BJ (cell line): ENCODE measurements at regions of chr2 and their contacts with region 1.

Region 1: DNA sequence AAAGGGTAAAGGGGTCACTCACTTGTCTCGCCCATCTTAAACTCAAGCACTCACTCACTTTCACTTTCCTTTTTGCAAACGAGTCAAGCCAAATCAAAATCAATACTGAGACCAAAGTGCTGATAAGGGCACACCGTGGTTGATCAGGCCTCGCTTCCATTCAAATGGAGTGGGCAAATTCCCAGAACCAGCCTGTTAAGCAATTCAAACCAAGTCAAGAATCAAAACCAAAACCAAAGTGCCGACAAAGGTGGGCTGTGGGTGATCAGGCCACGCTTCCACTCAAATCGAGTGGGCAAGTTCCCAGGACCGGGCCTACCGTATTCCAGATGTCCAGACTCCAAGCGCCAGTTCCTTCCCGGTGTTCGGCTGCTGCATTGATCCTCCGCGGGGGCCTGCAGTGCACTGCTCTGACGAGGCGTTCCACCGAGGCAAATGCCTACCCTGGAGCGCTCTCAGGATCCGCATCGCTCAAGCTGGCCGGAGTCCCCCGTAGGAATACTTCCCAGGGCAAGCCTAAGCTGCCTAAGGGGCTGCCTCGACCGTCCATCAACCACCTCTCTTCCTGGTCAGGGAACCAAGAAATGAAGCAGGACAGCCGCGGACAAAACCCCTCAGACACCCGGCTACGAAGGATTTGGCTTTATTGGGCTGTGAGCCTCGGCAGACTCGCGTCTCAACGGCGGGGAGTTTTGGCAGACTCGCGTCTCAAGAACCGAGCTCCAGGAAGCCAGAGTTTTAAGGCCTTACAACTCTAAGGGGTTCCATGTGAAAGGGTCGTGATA is 89.9 kb upstream of the SLC1A4 start:
- DNase-seq: no peak
- H3K4me3 ChIP-seq: no peak overlapping the region
- H3K27me3 ChIP-seq: peaks cover 12% of the 10 kb centered on the region
- CTCF ChIP-seq: no peak

Region 2: DNA sequence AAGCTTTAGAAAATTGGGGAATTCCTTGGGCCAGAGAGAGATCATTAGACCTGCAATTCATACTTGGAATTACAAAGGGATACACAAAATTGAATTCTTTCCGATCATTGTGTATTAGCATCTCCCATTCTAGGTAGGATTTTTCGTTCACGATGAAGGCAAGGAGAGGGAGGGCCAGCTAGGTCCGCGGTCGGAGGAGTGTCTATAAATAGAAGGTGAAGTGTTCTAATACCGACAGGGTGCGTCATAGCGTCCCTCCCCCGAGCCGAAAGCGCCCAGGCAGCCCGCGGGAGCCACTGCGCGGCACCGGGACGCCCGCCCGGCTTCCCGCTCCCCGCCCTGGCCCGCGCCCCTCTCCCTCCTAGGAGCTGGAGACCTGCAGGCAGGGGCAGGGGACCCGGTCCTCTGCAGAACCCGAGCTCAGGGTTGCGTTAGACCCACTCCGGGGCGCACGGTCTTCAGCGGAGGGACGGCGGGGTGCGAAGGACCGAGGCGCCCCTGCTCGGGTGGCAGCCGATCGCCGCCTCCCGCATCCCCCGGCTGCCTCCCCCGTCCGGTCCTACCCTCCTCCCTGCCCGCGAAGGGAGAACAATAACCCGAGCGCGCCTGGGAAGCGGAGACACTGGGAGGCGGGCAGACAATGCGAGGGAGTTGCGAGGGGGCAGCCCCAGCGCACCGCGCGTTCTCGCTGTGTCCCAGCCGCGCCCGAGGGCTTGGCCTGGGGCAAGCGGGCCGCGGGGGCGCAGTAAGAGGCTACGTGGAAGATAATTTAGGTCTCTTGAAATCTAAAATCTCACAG is 131.4 kb before region 1 on chr2:
- CTCF ChIA-PET with region 1: no interaction called
- POLR2A ChIA-PET with region 1: no interaction called
- DNase-seq: no peak
- H3K4me3 ChIP-seq: peak overlapping the region; percentile 57
- H3K27me3 ChIP-seq: no peaks in the 10 kb centered on the region
- CTCF ChIP-seq: no peak

Region 3: DNA sequence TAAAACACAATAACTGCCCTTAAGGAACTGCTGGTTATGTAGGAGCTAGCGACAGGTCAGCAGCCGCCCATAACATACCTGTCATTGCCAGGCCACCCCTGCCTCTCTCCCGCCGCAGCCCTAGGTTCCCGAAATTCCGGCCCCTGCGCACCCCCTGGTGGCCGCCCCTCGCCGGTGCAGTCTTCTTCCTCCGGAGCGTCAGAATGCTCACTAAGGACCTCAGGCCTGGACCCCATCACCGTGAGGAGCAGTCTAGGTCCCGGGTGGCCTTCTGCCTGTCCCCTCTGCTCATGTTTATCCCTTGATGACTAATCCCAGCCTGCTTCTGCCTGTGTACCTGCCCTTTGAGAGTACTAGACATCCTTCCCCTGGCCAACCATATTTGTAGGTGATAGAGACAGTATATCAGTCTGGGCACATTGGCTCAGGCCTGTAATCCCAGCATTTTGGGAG is 25.8 kb before region 1 on chr2:
- CTCF ChIA-PET with region 1: no interaction called
- POLR2A ChIA-PET with region 1: no interaction called
- DNase-seq: no peak
- H3K4me3 ChIP-seq: no peak overlapping the region
- H3K27me3 ChIP-seq: peaks cover 28% of the 10 kb centered on the region
- CTCF ChIP-seq: peak; percentile 99

Region 4: DNA sequence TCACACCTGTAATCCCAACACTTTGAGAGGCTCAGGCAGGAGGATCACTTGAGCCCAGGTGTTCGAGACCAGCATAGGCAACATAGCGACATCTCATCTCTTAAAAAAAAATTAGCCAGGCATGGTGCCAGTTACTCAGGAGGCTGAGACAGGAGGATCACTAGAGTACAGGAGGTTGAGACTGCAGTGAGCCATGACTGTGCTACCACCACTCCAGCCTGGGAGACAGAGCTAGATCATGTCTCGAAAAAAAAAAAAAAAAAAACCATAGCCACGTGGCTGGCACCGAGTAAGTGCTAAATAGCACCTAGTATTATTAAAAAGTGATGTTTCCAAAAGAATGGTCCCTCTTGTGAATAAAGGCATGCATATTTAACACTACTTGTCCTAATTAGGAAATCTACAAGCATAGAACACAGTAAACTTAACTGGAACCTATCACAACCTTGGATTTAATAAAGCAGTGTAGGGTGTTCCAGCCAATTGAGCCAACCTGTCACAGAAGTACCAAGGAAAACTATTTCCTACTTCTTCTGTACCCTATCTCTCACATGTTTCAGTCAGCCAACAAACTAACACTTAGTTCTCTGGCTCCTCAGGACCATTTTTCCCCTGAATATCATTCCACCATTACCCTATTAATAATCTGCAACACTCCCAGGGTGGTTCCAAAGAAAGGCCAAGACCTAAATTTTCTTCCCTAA is 221.9 kb after region 1 on chr2:
- CTCF ChIA-PET with region 1: no interaction called
- POLR2A ChIA-PET with region 1: interaction called, 13 read pairs
- DNase-seq: no peak
- H3K4me3 ChIP-seq: no peak overlapping the region
- H3K27me3 ChIP-seq: no peaks in the 10 kb centered on the region
- CTCF ChIP-seq: no peak